ENCODE measurements at regions of chr1 and their contacts with region 1.

Region 1: DNA sequence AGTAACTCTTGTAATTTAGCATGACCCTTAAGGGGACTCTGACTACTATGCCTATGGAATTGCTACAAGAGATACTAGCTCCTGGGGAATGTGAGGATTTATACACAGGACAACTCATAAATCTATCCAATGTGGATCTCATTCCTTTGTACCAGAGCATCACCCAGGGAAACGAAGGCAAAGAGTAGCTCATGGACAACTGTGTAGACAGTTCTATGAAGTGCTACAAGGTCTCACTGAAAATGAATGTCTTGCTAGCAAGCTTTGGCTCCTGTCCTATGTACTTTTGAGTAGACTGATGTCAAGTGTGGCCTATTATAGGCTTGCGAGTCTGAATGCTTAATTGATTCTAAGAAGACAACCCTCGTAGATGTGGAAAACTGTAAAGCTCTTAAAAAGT is 93.7 kb downstream of the ZSWIM5 start:
- DNase-seq: no peak
- H3K4me3 ChIP-seq: no peak overlapping the region
- H3K27ac ChIP-seq: no peak overlapping the region
- H3K4me1 ChIP-seq: no peaks in the 10 kb centered on the region
- H3K27me3 ChIP-seq: no peaks in the 10 kb centered on the region
- CTCF ChIP-seq: no peak
- POLR2A ChIP-seq: no peak

Region 2: DNA sequence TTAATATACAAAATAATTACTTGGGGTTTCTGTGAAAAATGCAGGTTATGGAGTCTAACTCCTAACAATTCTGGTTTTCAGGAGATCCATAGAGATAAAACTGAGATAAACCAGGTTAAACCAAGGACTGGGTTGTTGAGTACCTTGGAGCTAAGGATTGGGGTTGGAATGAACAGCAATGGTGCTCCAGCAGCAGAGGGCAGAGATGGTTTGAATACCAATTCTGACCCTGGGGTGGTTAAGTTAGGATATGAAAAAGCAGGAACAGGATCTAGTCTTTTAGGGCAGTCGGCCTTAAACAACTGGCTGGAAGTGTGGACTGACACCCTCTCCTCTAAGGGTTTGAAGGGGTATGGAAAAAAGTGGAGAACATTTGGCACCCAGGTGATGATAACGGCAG is 47.6 kb before region 1 on chr1:
- CTCF ChIA-PET with region 1: no interaction called
- POLR2A ChIA-PET with region 1: no interaction called
- dilution Hi-C with region 1: no loop called
- intact Hi-C with region 1: loop called (anchors 5 kb)
- DNase-seq: no peak
- H3K4me3 ChIP-seq: no peak overlapping the region
- H3K27ac ChIP-seq: no peak overlapping the region
- H3K4me1 ChIP-seq: no peaks in the 10 kb centered on the region
- H3K27me3 ChIP-seq: no peaks in the 10 kb centered on the region
- CTCF ChIP-seq: no peak
- POLR2A ChIP-seq: no peak

Region 3: GRCh38 chr1:45282351-45282750 is 169.7 kb after region 1 on chr1:
- CTCF ChIA-PET with region 1: no interaction called
- POLR2A ChIA-PET with region 1: no interaction called
- dilution Hi-C with region 1: no loop called
- intact Hi-C with region 1: no loop called
- DNase-seq: peak; percentile 78
- H3K4me3 ChIP-seq: no peak overlapping the region
- H3K27ac ChIP-seq: no peak overlapping the region
- H3K4me1 ChIP-seq: peaks cover 6% of the 10 kb centered on the region
- H3K27me3 ChIP-seq: no peaks in the 10 kb centered on the region
- CTCF ChIP-seq: no peak
- POLR2A ChIP-seq: no peak